Dendritic cell treated with granulocyte-macrophage colony-stimulating factor and Interleukin-4, amounts not matched to agents 40 ng/mL and 50 ng/mL, for 4 days (primary cell): ENCODE measurements at regions of chr1 and their contacts with region 1.

Region 1: GRCh38 chr1:173970252-173970651 is 51.9 kb downstream of the RC3H1 start:
- H3K4me3 Mint-ChIP-seq: no peak overlapping the region
- H3K27ac Mint-ChIP-seq: no peak overlapping the region
- H3K4me1 Mint-ChIP-seq: no peaks in the 10 kb centered on the region
- H3K27me3 Mint-ChIP-seq: no peaks in the 10 kb centered on the region

Region 2: GRCh38 chr1:173733912-173734311 is 236.3 kb before region 1 on chr1:
- intact Hi-C with region 1: no loop called
- H3K4me3 Mint-ChIP-seq: no peak overlapping the region
- H3K27ac Mint-ChIP-seq: no peak overlapping the region
- H3K4me1 Mint-ChIP-seq: no peaks in the 10 kb centered on the region
- H3K27me3 Mint-ChIP-seq: no peaks in the 10 kb centered on the region

Region 3: DNA sequence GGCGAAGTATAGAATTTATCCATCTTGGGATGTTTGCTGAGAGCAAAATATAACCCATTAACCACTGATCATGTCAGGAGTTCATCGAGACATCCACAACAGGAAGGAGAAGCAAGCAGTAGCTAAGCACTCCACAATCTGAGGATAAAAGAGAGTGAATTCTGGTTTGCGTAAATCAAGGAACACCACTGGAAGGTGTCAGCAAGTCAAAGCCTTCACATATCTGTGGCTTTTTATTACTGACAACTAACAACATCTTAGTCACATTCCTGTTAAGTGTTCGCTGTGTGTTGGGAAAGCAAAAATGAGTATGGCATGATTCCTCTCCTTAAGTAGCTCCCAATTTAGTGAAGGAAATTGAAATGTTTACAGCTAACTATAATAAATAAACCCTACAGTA is 190.3 kb before region 1 on chr1:
- intact Hi-C with region 1: no loop called
- H3K4me3 Mint-ChIP-seq: no peak overlapping the region
- H3K27ac Mint-ChIP-seq: no peak overlapping the region
- H3K4me1 Mint-ChIP-seq: peaks cover 11% of the 10 kb centered on the region
- H3K27me3 Mint-ChIP-seq: no peaks in the 10 kb centered on the region

Region 4: DNA sequence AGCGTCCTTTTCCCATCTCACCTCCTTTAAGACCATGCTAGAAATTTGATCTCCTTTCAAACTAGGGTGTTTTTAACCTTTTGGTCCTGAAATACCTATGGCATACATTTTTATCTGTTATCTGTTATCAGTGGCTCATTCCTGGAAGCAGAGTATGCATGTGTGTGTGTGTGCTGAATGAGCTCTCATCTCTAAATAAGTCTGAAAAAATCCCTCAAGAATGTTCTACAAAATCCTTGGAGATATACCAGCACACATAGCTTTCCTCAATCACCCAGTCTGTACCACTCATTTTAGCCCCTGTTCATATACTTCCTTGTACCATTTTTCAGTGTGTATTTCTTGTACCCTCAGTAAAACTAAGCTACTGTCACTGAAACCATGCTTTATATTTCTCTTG is 151.8 kb before region 1 on chr1:
- intact Hi-C with region 1: no loop called
- H3K4me3 Mint-ChIP-seq: no peak overlapping the region
- H3K27ac Mint-ChIP-seq: no peak overlapping the region
- H3K4me1 Mint-ChIP-seq: peaks cover 27% of the 10 kb centered on the region
- H3K27me3 Mint-ChIP-seq: no peaks in the 10 kb centered on the region

Region 5: GRCh38 chr1:173853074-173853473 is 117.2 kb before region 1 on chr1:
- intact Hi-C with region 1: loop called (anchors 10 kb)
- H3K4me3 Mint-ChIP-seq: no peak overlapping the region
- H3K27ac Mint-ChIP-seq: no peak overlapping the region
- H3K4me1 Mint-ChIP-seq: no peaks in the 10 kb centered on the region
- H3K27me3 Mint-ChIP-seq: no peaks in the 10 kb centered on the region